ENCODE measurements at regions of chr7 and their contacts with region 1.

Region 1: DNA sequence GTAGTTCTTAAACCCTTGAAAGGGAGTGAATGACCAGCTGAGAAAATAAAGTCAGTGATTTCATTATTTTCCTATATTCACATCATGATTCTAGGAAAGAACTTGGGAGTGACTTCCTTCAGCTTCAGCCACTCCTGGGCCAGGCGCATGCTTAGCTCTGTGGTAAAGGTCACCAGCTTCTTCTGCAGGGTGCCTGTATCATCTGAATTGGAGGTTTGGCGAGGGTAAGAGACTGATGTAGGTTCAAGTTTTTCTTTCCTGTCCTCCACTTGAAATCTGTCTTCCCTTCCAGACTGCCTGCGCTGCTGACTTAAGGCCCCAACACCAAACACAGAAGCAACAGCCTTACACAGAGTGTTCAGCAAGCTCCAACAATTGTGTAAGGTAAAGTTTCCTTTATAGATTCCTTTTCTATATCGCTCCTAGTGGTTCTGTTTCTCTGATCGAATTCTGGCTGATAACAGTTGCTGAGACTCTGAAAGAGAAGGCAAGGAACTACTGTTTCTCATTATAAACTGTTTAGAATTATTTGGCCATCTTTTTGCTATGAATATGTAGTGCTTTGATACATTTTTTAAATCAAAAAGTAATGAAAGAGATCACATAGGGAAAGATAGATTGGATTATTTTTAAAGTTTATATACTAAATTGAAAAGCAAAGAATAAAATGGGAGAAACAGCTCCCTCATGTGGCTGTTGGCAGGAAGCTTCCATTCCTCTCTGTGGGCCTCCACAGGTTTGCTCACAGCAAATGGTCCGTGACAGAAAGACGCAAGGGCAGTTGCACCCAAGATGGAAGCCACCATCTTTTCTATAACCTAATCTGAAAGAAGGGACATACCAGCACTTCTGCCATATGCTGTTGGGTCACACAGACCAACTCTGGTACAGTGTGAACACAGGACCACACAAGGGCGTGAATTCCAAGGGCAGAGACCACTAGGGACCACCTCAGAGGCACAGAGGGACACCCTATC is 14.0 kb downstream of the GATAD1 start:
- DNase-seq: peak in 4 of 9 experiments; percentile 14 to 54 (median 30)
- ATAC-seq: peak; percentile 51
- H3K4me3 ChIP-seq: no peak overlapping the region
- H3K4me3 Mint-ChIP-seq: no peak overlapping the region
- H3K27ac ChIP-seq: no peak overlapping the region
- H3K27ac Mint-ChIP-seq: no peak overlapping the region
- H3K4me1 ChIP-seq: no peaks in the 10 kb centered on the region
- H3K4me1 Mint-ChIP-seq: no peaks in the 10 kb centered on the region
- H3K27me3 ChIP-seq: no peaks in the 10 kb centered on the region
- H3K27me3 Mint-ChIP-seq: no peaks in the 10 kb centered on the region
- CTCF ChIP-seq: peak; percentile 87

Region 2: DNA sequence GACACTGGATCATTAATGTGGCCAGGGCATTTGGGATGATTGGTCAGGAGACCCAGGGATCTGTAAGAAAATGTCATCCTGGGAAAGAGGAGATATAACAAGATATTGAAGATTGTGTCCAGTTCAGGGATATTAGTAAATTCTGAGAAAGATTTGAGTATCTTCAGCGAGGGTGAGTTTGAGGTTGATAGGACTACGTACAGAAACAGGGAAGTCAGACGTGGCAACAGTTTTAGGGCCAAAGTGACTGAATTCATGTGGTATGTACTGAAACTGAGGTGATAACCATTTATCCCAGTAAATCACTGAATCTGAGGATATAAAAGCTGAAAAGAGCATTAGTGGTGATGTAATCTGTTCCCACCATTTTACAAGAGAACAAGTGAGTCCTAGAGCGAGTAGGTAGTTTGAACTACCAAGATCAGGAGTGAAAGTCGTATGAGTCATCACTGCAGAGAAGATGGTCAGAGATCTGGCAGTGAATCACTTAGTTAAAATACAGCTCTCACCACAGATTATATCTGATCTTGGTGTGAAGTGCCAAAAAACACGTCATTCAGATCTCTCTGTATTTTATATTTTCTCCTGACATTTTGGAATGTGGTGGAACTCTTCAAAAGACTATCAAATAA is 1644.7 kb before region 1 on chr7:
- CTCF ChIA-PET with region 1: no interaction called
- POLR2A ChIA-PET with region 1: no interaction called
- intact Hi-C with region 1: loop called in 1 of 2 experiments (anchors 10 kb)
- DNase-seq: no peak
- ATAC-seq: no peak
- H3K4me3 ChIP-seq: no peak overlapping the region
- H3K4me3 Mint-ChIP-seq: no peak overlapping the region
- H3K27ac ChIP-seq: no peak overlapping the region
- H3K27ac Mint-ChIP-seq: no peak overlapping the region
- H3K4me1 ChIP-seq: no peaks in the 10 kb centered on the region
- H3K4me1 Mint-ChIP-seq: no peaks in the 10 kb centered on the region
- H3K27me3 ChIP-seq: no peaks in the 10 kb centered on the region
- H3K27me3 Mint-ChIP-seq: no peaks in the 10 kb centered on the region
- CTCF ChIP-seq: no peak

Region 3: DNA sequence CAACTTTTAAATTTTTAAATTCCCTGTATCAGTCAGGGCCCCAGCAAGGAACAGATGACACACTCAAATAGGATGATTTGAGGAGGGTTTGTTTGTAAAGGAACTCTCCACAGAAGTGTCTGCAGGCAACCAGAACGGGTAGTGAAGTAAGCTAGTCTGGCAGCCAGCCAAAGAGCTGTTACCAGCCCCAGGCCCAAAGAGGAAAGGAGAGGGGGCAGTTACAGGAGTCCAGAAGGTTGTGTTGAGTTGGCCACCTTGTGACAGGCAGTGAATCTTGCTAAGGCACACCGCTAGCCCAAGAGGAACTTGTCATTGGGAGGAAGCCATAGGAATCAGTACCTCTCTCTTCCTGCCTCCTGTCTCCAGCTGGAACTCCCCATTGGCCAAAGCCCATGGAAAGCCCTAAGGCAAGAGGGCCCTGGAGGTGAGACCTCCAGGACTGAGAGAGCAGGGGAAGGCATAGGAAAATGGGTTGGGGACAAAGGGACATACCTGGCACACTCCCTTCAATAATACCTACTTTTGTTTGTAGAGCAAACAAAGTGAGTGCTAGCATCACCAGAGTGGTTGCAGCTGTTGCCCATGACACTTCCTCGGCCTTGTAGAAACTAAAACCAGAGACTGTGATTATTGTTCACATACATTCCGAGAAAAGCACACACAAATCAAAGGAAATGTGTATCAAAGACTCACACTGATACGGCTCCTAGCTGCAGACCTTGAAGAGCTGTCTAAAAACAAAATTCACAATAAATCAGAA is 39.5 kb before region 1 on chr7:
- CTCF ChIA-PET with region 1: interaction called, 10 read pairs
- POLR2A ChIA-PET with region 1: no interaction called
- intact Hi-C with region 1: loop called (anchors 1 to 5 kb)
- DNase-seq: no peak
- ATAC-seq: no peak
- H3K4me3 ChIP-seq: no peak overlapping the region
- H3K4me3 Mint-ChIP-seq: no peak overlapping the region
- H3K27ac ChIP-seq: no peak overlapping the region
- H3K27ac Mint-ChIP-seq: no peak overlapping the region
- H3K4me1 ChIP-seq: no peaks in the 10 kb centered on the region
- H3K4me1 Mint-ChIP-seq: peaks cover 9% of the 10 kb centered on the region
- H3K27me3 ChIP-seq: peaks cover 0 to 10% of the 10 kb centered on the region in 2 experiments
- H3K27me3 Mint-ChIP-seq: peaks cover 19% of the 10 kb centered on the region
- CTCF ChIP-seq: no peak

Measured in CD8-positive, alpha-beta T cell (primary cell).